Stomach (tissue), 19 donors: ENCODE measurements at regions of chr15 and their contacts with region 1.

Region 1: GRCh38 chr15:69058830-69059556 is 44.5 kb downstream of the NOX5 start:
- DNase-seq: peak; percentile 92 to 95
- H3K4me3 ChIP-seq: no peak overlapping the region
- H3K27ac ChIP-seq: no peak overlapping the region
- H3K4me1 ChIP-seq: peaks cover 0 to 23% (median 9%) of the 10 kb centered on the region in 4 donors
- H3K27me3 ChIP-seq: peaks cover 0 to 21% (median 0%) of the 10 kb centered on the region in 3 donors
- CTCF ChIP-seq: peak in 5 of 7 experiments; percentile 56 to 93 (median 78)
- EP300 ChIP-seq: no peak
- POLR2A ChIP-seq: no peak

Region 2: GRCh38 chr15:69225355-69226025 is 166.5 kb after region 1 on chr15:
- intact Hi-C with region 1: loop called (anchors 10 kb)
- DNase-seq: peak in 1 of 2 donors; percentile 44
- H3K4me3 ChIP-seq: no peak overlapping the region
- H3K27ac ChIP-seq: peak overlapping the region in 1 of 5 donors; percentile 36
- H3K4me1 ChIP-seq: peaks cover 0 to 18% (median 0%) of the 10 kb centered on the region in 4 donors
- H3K27me3 ChIP-seq: no peaks in the 10 kb centered on the region
- CTCF ChIP-seq: peak in 2 of 7 experiments; percentile 9 to 27
- EP300 ChIP-seq: no peak
- POLR2A ChIP-seq: no peak

Region 3: GRCh38 chr15:69237718-69238117 is 178.7 kb after region 1 on chr15:
- intact Hi-C with region 1: no loop called
- DNase-seq: peak in 1 of 2 donors; percentile 23
- H3K4me3 ChIP-seq: no peak overlapping the region
- H3K27ac ChIP-seq: no peak overlapping the region
- H3K4me1 ChIP-seq: peaks cover 0 to 6% (median 0%) of the 10 kb centered on the region in 4 donors
- H3K27me3 ChIP-seq: no peaks in the 10 kb centered on the region
- CTCF ChIP-seq: no peak
- EP300 ChIP-seq: no peak
- POLR2A ChIP-seq: no peak

Region 4: DNA sequence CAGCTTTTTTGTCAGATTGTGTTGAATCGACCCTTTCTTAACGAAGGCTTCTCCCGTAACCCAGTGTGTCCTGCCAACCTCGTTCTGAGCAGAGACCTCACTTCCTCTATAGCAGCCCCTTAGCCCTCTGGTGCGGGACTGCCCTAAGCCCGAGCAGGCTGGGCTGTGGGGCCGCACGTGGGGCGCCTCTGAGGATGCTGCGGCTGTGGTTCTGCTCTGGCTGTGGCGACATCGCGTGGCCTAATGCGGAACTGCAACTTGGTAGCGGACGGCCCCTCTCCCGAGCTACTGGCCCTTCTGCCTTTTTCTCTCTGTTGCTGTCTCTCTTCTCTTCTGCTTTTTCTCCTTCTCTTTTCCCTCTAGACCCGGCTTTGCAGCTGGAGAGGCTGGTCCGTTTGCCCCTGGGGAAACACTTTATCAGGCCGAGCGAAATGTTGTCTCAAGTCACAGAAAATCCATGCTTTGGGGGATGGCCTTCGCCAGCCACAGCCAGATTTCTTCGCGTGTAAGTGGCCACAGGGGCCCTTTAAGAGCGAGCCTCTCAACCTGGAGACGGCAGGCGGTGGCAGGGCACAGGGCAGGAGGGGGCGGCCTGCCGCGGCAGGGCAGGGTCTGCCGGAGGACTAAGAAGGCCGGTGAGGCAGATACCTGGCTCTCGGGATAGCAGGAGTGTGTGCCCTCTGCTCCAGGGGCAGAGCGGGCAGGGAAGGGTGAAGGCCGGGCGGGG is 335.7 kb after region 1 on chr15:
- intact Hi-C with region 1: loop called (anchors 5 kb)
- DNase-seq: peak; percentile 82 to 93
- H3K4me3 ChIP-seq: no peak overlapping the region
- H3K27ac ChIP-seq: no peak overlapping the region
- H3K4me1 ChIP-seq: peaks cover 0 to 9% (median 9%) of the 10 kb centered on the region in 4 donors
- H3K27me3 ChIP-seq: peaks cover 0 to 4% (median 0%) of the 10 kb centered on the region in 3 donors
- CTCF ChIP-seq: peak in 5 of 7 experiments; percentile 89 to 95 (median 92)
- EP300 ChIP-seq: no peak
- POLR2A ChIP-seq: no peak